GM23248 (cell line): ENCODE measurements at regions of chr5 and their contacts with region 1.

Region 1: GRCh38 chr5:73189871-73190376 is 16.9 kb downstream of the TMEM174 start:
- DNase-seq: peak; percentile 85
- H3K4me3 ChIP-seq: peak overlapping the region; percentile 31
- H3K27ac ChIP-seq: peak overlapping the region; percentile 73
- H3K4me1 ChIP-seq: peaks cover 28% of the 10 kb centered on the region
- H3K27me3 ChIP-seq: no peaks in the 10 kb centered on the region

Region 2: DNA sequence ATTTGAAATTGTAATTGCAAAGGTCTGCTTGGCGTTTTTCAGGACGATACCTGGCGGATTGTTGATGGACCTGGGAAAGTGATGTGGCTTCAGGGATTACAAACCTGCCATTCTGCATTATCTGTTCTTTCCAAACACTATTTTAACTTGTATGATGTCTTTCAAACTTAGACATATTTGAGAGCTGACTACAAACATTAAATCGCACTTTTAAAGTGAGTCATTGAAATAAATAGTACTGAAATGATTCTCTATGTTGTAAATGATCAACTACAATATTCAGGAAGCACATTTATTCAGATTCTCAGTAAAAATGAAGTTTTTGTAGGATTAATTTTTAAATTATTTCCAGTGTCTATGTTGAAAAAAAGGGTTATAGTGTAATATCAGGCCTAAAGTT is 101.9 kb before region 1 on chr5:
- in situ Hi-C with region 1: loop called (anchors 10 kb)
- DNase-seq: peak; percentile 41
- H3K4me3 ChIP-seq: no peak overlapping the region
- H3K27ac ChIP-seq: no peak overlapping the region
- H3K4me1 ChIP-seq: peaks cover 16% of the 10 kb centered on the region
- H3K27me3 ChIP-seq: no peaks in the 10 kb centered on the region